ENCODE measurements at regions of chr7 and their contacts with region 1.

Region 1: DNA sequence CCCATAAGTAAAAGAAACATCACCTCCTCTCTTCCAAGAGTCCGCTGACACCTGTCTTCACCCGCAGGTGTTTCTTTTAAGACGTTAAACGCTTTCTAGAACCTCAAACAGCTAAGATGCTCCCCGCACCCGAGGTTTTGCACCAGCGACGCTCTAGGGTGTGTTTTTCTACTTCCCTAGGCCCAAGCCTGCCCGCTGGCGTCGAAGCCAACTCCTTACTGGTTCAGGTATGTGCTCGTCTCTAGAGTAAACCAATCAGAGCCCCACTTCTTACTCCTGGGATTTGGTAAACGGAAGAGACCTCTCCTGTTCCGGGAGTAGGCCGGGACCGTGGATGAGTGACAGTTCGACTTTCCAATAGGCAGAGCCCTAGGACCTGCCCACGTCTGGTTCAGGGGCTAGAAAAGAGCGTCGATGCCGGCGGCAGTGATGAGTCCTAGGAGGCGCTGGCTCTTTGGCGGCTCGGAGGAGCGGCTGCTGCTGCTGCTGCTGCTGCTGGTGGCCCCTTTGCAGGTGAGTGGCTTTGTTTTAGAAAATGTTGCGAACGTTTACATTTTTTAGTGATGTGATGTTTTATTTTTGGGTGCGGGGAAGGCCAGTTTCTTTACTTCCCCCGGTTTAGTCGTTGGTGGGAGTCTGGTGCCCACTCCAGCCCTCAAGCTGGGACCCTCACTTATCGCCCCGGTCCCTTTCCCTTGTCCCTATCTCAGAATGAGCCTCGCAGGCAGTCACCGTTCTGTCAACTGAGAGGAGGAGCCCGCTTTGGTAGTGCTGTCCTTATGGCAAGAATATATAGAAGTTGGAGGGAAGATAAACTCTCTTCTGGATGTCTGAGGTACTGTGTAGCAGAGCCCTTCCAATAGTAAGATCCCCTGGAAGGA is at the start of gene BPGM:
- DNase-seq: peak; percentile 100
- H3K4me3 ChIP-seq: peak within 1 kb of the TSS; percentile 66
- H3K27me3 ChIP-seq: no peaks in the 10 kb centered on the region
- CTCF ChIP-seq: peak; percentile 37
- polyA plus RNA-seq, gene BPGM: 14.1 and 25.0 TPM in 2 replicates

Region 2: DNA sequence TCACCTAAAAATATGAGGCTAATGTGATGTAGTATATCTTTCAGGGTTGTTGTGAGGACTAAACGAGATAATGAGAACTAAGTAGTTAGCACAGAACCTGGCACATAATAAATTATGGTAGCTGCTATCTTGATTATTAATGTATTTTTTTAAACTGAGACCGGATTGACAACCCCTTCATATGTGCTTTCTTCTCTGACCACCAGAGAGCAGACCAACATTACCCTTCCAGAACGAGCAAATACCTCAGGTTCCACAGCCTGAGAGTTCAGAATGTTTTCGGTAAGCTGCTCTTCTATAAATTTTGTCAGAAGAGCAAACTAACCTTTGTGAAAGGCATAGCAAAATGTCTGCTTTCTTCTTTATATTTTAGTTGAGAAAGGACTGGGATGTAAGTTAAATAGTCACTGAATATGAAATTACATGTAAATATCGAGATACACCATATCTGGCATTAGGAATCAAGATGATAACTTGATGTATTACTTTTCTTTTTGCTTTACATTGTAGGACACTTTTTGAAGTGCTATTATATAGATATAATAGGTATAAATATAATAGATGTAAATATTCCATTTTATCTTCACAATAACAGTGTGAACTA is 13.6 kb before region 1 on chr7:
- CTCF ChIA-PET with region 1: interaction called, 29 read pairs
- POLR2A ChIA-PET with region 1: no interaction called
- DNase-seq: no peak
- H3K4me3 ChIP-seq: no peak overlapping the region
- H3K27me3 ChIP-seq: no peaks in the 10 kb centered on the region
- CTCF ChIP-seq: peak; percentile 66

Region 3: DNA sequence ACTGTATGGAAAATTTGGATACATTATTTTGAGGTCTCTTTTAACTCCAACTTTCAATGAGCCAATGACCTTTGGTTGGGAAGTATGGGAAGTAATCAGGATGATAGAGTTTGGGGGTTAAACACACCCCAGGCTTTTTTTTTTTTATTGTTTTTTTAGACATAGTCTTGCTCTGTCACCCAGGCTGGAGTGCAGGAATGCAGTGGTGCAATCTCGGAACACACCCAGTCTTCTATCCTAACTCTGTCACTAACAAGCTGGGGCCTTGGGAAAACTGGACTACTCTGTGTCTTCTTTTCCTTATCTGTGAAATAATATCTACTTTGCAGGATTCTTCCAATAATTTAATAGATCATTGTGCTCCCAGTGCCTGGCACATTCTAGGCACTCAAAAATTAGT is 302.1 kb after region 1 on chr7:
- CTCF ChIA-PET with region 1: no interaction called
- POLR2A ChIA-PET with region 1: interaction called, 11 read pairs
- DNase-seq: no peak
- H3K4me3 ChIP-seq: no peak overlapping the region
- H3K27me3 ChIP-seq: no peaks in the 10 kb centered on the region
- CTCF ChIP-seq: no peak

Region 4: GRCh38 chr7:135501403-135501802 is 854.7 kb after region 1 on chr7:
- CTCF ChIA-PET with region 1: no interaction called
- POLR2A ChIA-PET with region 1: interaction called, 13 read pairs
- DNase-seq: no peak
- H3K4me3 ChIP-seq: no peak overlapping the region
- H3K27me3 ChIP-seq: no peaks in the 10 kb centered on the region
- CTCF ChIP-seq: peak; percentile 12; the same call in 1 of the 2 replicates